Activated naive CD4-positive, alpha-beta T cell treated with anti-CD3 and anti-CD28 coated beads for 36 hours (primary cell): ENCODE measurements at regions of chr19 and their contacts with region 1.

Region 1: DNA sequence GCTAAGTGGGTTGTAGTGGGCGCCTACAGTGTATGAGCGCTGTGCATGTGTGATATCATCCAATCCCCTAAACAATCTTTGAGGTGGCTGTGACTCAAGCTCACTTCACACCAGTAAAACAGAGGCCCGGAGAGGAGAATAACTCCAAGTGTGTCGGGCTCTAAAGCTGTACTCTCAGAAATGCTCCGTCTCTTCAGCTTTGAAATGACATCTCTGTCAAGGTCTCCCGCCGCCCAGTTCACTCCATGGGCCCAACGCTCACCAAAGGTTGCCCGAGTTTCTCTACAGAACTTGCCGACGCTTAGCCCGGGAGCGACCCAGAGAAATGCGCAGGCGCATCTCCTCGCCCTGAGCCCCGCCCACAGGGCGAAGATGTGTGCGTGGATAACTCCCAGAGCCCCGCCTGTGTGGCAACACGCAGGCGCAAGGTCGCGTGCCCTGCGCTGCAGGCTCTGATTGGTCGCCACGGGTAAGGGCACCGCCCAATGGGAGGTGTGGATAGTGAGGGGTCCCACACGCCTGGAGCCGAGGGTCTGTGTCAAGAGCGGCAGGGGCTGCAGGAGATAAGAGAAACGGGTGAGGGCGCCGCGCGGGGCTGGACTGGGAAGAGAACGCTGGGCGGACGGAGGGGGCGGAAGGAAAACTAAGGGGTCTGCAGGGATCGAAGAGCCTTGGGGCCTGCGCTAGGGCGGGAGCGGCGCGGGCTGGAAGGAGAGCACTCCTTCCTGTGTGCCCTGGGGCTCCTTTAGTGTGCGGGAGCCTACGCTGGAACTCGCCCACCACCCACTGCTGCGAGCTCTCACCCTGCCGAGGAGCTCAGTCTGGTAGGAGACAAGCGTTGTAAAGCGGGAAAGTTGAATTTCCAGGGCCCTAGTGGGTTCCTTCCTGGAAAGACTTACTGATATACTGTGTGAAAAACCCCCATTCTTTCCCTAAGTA is at the start of gene ZNF526:
- DNase-seq: peak; percentile 97
- H3K4me3 Mint-ChIP-seq: peak within 1 kb of the TSS; percentile 96
- H3K27ac Mint-ChIP-seq: peak within 1 kb of the TSS; percentile 94
- H3K4me1 Mint-ChIP-seq: peaks cover 55% of the 10 kb centered on the region
- H3K27me3 Mint-ChIP-seq: no peaks in the 10 kb centered on the region
- total RNA-seq, gene ZNF526: 11.5 to 11.6 TPM

Region 2: GRCh38 chr19:41883821-41884733 is 336.0 kb before region 1 on chr19:
- CTCF ChIA-PET with region 1: no interaction called
- intact Hi-C with region 1: loop called (anchors 10 kb)
- DNase-seq: peak; percentile 91
- H3K4me3 Mint-ChIP-seq: peak overlapping the region; percentile 90
- H3K27ac Mint-ChIP-seq: peak overlapping the region; percentile 92
- H3K4me1 Mint-ChIP-seq: peaks cover 54% of the 10 kb centered on the region
- H3K27me3 Mint-ChIP-seq: no peaks in the 10 kb centered on the region

Region 3: GRCh38 chr19:41998246-41999020 is 221.6 kb before region 1 on chr19:
- CTCF ChIA-PET with region 1: no interaction called
- intact Hi-C with region 1: no loop called
- DNase-seq: peak; percentile 59
- H3K4me3 Mint-ChIP-seq: no peak overlapping the region
- H3K27ac Mint-ChIP-seq: no peak overlapping the region
- H3K4me1 Mint-ChIP-seq: peaks cover 24% of the 10 kb centered on the region
- H3K27me3 Mint-ChIP-seq: peaks cover 65% of the 10 kb centered on the region

Region 4: DNA sequence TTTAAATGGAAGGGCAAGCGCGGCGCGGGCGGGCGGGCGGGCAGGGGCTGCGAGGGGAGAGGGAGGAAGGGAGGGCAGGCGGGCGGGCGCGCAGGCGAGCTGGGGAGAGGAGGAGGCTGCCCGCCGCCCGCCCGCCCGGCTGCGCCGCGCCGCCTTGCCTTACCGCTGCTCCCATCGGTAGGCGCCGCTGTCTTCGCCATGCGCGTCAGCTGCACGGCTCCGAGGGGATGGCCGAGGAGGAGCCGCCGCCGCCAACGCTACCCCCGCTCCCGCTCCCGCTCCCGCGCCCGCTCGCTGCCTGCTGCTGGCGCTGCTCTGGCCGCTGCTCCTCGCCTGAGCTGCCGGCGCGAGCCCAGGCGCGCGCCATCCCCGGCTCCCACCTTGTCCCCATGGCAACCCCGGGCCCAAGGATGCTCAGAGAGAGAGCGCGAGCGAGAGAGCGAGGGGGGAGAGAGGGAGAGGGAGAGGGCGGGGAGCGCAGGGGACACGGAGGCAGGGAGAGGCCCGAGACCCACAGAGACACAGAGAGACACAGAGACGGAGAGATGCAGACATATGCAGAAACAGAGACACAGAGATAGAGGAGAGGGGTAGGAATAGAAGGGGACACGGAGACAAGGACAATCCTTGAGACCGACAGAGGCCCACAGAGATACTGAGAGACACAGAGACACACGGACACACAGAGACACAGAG is 42.9 kb before region 1 on chr19:
- CTCF ChIA-PET with region 1: no interaction called
- intact Hi-C with region 1: loop called (anchors 1 kb)
- DNase-seq: peak; percentile 83
- H3K4me3 Mint-ChIP-seq: no peak overlapping the region
- H3K27ac Mint-ChIP-seq: no peak overlapping the region
- H3K4me1 Mint-ChIP-seq: peaks cover 11% of the 10 kb centered on the region
- H3K27me3 Mint-ChIP-seq: peaks cover 26% of the 10 kb centered on the region

Region 5: GRCh38 chr19:42254989-42255765 is 35.1 kb after region 1 on chr19 and contains the start of gene ERF:
- CTCF ChIA-PET with region 1: no interaction called
- intact Hi-C with region 1: loop called (anchors 1 kb)
- DNase-seq: peak; percentile 93
- H3K4me3 Mint-ChIP-seq: peak within 1 kb of the TSS; percentile 73
- H3K27ac Mint-ChIP-seq: peak within 1 kb of the TSS; percentile 78
- H3K4me1 Mint-ChIP-seq: peaks cover 29% of the 10 kb centered on the region
- H3K27me3 Mint-ChIP-seq: no peaks in the 10 kb centered on the region
- total RNA-seq, gene ERF: 52.4 to 55.6 TPM

Region 6: DNA sequence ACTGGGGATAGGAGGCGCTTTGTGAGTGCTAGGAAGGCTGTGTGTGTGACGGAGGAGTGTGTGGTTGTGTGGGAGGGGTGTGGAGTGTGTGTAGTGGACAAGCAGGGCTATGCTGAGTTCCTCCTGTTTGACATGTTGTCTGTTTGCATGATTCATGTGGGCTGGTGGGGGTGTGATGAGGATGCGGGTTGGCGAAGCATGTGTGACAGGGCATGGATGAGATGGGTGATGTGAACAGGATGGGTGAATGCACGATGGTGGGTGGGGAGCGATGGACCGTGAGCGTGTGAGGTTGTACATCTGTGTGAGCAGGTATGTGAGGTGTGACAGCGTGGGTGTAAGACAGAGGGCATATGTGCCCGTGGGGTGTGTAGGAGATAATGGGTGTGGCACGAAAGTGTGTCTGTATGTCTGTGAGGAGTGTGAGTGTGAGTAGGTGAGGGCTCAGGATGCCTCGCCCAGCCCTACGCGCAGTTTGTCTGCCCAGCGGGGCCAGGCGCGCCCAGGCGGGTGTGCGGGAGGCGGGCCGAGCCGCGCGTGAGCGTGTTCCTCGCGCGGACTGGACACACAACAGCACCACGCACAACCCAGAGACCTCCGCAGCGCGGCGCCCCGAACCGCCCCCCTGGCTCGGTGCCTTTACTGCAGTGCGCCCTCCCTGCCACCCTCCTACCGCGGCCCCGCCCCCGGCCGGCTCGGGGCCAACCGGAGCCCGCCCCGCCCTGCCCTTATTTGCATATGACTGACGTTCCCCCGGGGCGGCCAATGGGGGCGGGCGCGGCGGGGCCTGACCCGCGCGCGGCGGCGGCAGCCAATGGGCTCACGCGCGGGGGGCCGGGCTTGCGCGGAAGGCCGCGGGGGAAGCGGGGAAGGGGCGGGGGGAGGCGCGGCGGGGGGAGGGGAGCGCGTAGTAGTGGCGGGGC is 63.3 kb after region 1 on chr19:
- CTCF ChIA-PET with region 1: interaction called, 5 read pairs
- intact Hi-C with region 1: loop called (anchors 1 kb)
- DNase-seq: peak; percentile 96
- H3K4me3 Mint-ChIP-seq: peak overlapping the region; percentile 7
- H3K27ac Mint-ChIP-seq: no peak overlapping the region
- H3K4me1 Mint-ChIP-seq: peaks cover 45% of the 10 kb centered on the region
- H3K27me3 Mint-ChIP-seq: no peaks in the 10 kb centered on the region

Region 7: GRCh38 chr19:42450314-42450934 is 230.3 kb after region 1 on chr19:
- CTCF ChIA-PET with region 1: no interaction called
- intact Hi-C with region 1: no loop called
- DNase-seq: peak; percentile 89
- H3K4me3 Mint-ChIP-seq: no peak overlapping the region
- H3K27ac Mint-ChIP-seq: no peak overlapping the region
- H3K4me1 Mint-ChIP-seq: no peaks in the 10 kb centered on the region
- H3K27me3 Mint-ChIP-seq: no peaks in the 10 kb centered on the region